ENCODE measurements at regions of chr9 and their contacts with region 1.

Region 1: DNA sequence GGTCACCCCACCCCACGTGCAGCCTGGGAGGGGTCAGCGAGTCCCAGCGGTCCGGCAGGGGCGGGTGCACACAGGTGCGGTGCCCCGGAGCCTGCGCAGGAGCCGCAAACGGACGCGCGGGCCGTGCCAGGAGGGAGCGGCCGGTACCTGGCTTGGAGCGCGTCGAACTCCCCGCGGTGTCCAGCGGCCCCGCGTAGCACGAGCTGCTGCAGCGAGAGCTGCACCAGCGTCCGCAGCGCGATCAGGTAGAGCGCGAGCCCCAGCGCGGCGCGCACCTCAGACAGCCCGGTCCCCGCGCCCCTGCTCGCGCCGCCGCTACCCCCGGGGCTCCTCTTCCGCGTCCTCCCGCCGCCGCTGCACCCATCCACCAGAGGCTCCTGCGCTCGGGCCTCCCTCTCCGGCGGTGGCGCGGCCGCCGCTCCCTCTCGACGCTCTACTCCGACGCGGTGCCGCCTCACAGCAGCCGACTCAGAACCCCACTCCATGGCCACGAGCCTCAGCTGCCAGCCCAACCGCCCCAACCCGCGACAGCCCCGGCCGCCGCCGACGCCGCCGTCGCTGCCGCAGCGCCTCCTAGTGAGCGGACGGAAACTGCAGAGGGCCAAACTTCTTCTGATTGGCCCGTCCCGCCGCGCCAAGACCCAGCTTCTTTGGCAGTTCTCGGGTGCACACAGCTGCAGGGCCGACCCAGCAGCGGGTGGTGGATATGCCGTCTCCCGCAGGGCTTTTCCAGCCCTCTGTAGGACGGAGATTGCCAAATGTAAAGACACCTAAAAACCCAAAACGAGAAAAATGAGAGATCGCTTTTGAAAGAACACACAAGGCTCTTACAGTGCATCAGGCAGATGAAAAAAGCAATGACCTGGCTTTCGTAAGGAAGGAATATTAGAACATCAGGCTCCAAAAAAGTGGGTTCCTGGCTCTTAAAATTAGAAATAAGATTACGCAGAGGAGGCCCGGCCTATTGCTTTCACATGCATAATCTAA is at the start of gene ERMP1:
- DNase-seq: peak; percentile 90
- ATAC-seq: peak; percentile 89
- H3K4me3 Mint-ChIP-seq: peak within 1 kb of the TSS; percentile 92
- H3K27ac Mint-ChIP-seq: peak within 1 kb of the TSS; percentile 87
- H3K4me1 Mint-ChIP-seq: peaks cover 46% of the 10 kb centered on the region
- H3K27me3 Mint-ChIP-seq: no peaks in the 10 kb centered on the region
- CTCF ChIP-seq: peak; percentile 88
- total RNA-seq, gene ERMP1: 14.7 to 15.9 TPM

Region 2: GRCh38 chr9:5817869-5818268 is 15.0 kb before region 1 on chr9:
- CTCF ChIA-PET with region 1: interaction called, 8 read pairs
- POLR2A ChIA-PET with region 1: interaction called, 11 read pairs
- intact Hi-C with region 1: no loop called
- DNase-seq: no peak
- ATAC-seq: no peak
- H3K4me3 Mint-ChIP-seq: no peak overlapping the region
- H3K27ac Mint-ChIP-seq: no peak overlapping the region
- H3K4me1 Mint-ChIP-seq: peaks cover 12% of the 10 kb centered on the region
- H3K27me3 Mint-ChIP-seq: no peaks in the 10 kb centered on the region
- CTCF ChIP-seq: no peak

Region 3: GRCh38 chr9:5851445-5851844 is 18.6 kb after region 1 on chr9:
- CTCF ChIA-PET with region 1: interaction called, 124 read pairs
- POLR2A ChIA-PET with region 1: interaction called, 7 read pairs
- intact Hi-C with region 1: no loop called
- DNase-seq: peak; percentile 70
- ATAC-seq: peak; percentile 93
- H3K4me3 Mint-ChIP-seq: no peak overlapping the region
- H3K27ac Mint-ChIP-seq: peak overlapping the region; percentile 1
- H3K4me1 Mint-ChIP-seq: peaks cover 53% of the 10 kb centered on the region
- H3K27me3 Mint-ChIP-seq: no peaks in the 10 kb centered on the region
- CTCF ChIP-seq: no peak

Region 4: GRCh38 chr9:5857928-5858327 is 25.1 kb after region 1 on chr9:
- CTCF ChIA-PET with region 1: interaction called, 124 read pairs
- POLR2A ChIA-PET with region 1: no interaction called
- intact Hi-C with region 1: no loop called
- DNase-seq: no peak
- ATAC-seq: no peak
- H3K4me3 Mint-ChIP-seq: no peak overlapping the region
- H3K27ac Mint-ChIP-seq: no peak overlapping the region
- H3K4me1 Mint-ChIP-seq: peaks cover 16% of the 10 kb centered on the region
- H3K27me3 Mint-ChIP-seq: no peaks in the 10 kb centered on the region
- CTCF ChIP-seq: no peak